ENCODE measurements at regions of chr17 and their contacts with region 1.

Region 1: DNA sequence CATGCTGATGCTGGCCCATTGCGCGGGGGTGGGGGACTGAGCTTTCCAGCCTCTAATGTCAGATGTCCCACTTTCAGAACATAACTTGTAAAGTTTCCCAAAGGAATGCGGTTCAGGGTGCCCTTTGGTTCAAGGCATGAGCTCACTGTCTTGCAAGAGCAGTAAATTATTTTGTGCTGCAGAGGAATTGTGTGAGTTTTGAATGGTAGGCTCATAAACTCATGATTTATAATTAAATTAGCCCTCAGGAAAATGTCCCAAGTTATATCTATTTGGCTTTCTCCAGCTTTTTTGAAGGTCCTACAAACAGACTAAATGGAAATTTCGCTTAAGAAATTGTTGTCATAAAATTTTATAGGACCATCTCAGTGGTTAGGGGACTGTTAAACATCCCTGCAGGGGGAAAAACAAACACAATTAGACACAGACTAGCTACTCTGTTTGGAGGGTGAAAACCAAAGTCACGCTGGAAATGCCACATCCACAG is 321.8 kb downstream of the HS3ST3B1 start:
- DNase-seq: no peak
- ATAC-seq: no peak
- H3K4me3 ChIP-seq: no peak overlapping the region
- H3K27ac ChIP-seq: no peak overlapping the region
- H3K4me1 ChIP-seq: no peaks in the 10 kb centered on the region
- H3K27me3 ChIP-seq: no peaks in the 10 kb centered on the region

Region 2: GRCh38 chr17:14545156-14545906 is 77.3 kb before region 1 on chr17:
- intact Hi-C with region 1: no loop called
- DNase-seq: no peak
- ATAC-seq: no peak
- H3K4me3 ChIP-seq: no peak overlapping the region
- H3K27ac ChIP-seq: no peak overlapping the region
- H3K4me1 ChIP-seq: no peaks in the 10 kb centered on the region
- H3K27me3 ChIP-seq: no peaks in the 10 kb centered on the region

Region 3: DNA sequence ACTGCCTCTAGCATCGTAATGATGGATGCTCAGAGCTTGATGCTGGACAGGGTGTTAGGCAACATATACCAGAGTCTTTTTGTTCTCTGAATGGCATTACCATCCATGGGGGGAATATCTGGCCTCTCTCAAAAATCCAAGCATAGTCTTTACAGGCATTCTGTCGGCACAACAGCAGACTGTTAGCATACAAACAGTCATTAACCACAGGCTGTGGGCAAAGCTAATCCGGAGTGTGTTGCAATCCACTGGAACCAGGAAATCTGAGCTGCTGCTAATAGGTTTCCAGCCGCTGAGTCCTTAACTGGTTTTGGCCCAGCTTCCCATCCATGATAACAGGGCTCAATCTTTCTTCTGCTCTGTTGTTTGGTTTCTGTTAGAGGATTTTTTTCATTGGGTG is 50.2 kb after region 1 on chr17:
- intact Hi-C with region 1: loop called in 1 of 4 experiments (anchors 10 kb)
- DNase-seq: no peak
- ATAC-seq: no peak
- H3K4me3 ChIP-seq: no peak overlapping the region
- H3K27ac ChIP-seq: no peak overlapping the region
- H3K4me1 ChIP-seq: no peaks in the 10 kb centered on the region
- H3K27me3 ChIP-seq: no peaks in the 10 kb centered on the region

Measured in right cardiac atrium (tissue), 5 donors.